HepG2 (cell line): ENCODE measurements at regions of chr2 and their contacts with region 1.

Region 1: GRCh38 chr2:223123855-223124610 is 72.0 kb downstream of the KCNE4 start:
- DNase-seq: no peak
- ATAC-seq: no peak
- H3K4me3 ChIP-seq: no peak overlapping the region
- H3K27ac ChIP-seq: no peak overlapping the region
- H3K4me1 ChIP-seq: no peaks in the 10 kb centered on the region
- H3K27me3 ChIP-seq: no peaks in the 10 kb centered on the region
- CTCF ChIP-seq: no peak
- EP300 ChIP-seq: no peak
- POLR2A ChIP-seq: no peak
- RAD21 ChIP-seq: no peak

Region 2: GRCh38 chr2:223155956-223156355 is 31.9 kb after region 1 on chr2:
- CTCF ChIA-PET with region 1: no interaction called
- POLR2A ChIA-PET with region 1: no interaction called
- in situ Hi-C with region 1: no loop called
- intact Hi-C with region 1: loop called (anchors 2 kb)
- DNase-seq: no peak
- ATAC-seq: no peak
- H3K4me3 ChIP-seq: no peak overlapping the region
- H3K27ac ChIP-seq: no peak overlapping the region
- H3K4me1 ChIP-seq: no peaks in the 10 kb centered on the region
- H3K27me3 ChIP-seq: no peaks in the 10 kb centered on the region
- CTCF ChIP-seq: no peak
- EP300 ChIP-seq: no peak
- POLR2A ChIP-seq: no peak
- RAD21 ChIP-seq: no peak

Region 3: DNA sequence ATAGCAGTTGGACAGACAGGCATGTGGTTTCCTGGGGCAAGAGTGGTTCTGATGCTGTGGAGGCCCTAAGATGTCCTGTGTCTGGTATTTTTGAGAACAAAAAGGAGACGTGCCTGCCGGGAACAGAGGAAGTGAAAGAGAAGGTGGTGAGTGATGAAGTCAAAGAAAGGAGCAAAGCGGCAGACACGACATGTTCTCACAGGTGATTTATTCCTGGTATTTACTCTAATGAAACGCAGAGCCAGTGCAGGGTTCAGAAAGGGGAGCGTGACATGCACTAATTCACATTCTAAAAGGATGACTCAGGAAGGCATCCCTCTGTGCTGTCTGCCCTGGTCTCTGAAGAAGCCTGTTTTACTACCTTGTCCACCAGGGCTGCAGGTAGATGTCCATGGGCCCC is 138.9 kb after region 1 on chr2:
- CTCF ChIA-PET with region 1: no interaction called
- POLR2A ChIA-PET with region 1: no interaction called
- in situ Hi-C with region 1: no loop called
- intact Hi-C with region 1: no loop called
- DNase-seq: no peak
- ATAC-seq: peak; percentile 62
- H3K4me3 ChIP-seq: no peak overlapping the region
- H3K27ac ChIP-seq: no peak overlapping the region
- H3K4me1 ChIP-seq: no peaks in the 10 kb centered on the region
- H3K27me3 ChIP-seq: no peaks in the 10 kb centered on the region
- CTCF ChIP-seq: no peak
- EP300 ChIP-seq: no peak
- POLR2A ChIP-seq: no peak
- RAD21 ChIP-seq: no peak

Region 4: DNA sequence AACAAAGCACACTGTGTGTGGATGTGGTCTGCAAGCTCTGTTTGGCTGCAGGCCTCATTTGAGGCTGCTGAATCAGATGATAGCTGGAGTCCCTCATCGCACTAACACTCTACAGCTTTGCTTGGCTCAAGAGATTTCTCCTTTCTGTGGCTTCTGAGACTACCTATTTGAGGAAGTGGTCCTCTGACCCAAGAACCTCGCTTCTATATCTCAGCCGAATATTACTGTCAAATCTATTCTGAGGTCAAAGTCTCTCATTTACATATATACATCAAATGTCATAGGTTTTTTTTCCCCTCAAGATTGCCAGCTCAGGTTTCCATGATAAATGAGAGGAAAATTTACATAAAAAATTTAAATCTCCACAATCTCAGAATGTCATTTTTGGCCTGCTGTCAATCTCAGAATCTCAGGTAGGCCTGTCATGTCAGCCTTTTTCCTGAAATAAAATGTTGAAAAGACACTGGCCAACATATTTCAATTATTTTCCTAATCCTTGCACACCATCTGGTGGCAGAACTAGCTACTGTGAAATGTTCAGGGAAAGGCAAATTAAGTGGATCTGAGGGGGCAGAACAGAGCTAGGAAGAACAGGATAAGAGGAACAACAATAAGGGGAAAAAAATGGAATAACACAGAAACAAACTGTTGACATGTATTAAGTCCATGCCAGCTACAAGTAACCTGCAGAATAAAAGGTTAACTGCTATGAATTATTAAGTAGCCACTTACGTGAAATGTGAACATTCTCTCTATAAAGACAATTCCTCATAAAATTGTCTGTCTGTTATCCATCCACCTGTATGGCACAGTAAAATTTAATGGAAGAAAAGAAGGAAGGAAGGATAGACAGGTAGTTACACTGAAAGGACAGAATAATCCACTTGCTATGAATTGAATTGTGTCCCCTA is 674.0 kb after region 1 on chr2:
- CTCF ChIA-PET with region 1: no interaction called
- POLR2A ChIA-PET with region 1: no interaction called
- in situ Hi-C with region 1: no loop called
- intact Hi-C with region 1: no loop called
- DNase-seq: peak; percentile 59
- ATAC-seq: peak; percentile 87
- H3K4me3 ChIP-seq: no peak overlapping the region
- H3K27ac ChIP-seq: no peak overlapping the region
- H3K4me1 ChIP-seq: peaks cover 11% of the 10 kb centered on the region; the same call in 1 of the 2 replicates
- H3K27me3 ChIP-seq: no peaks in the 10 kb centered on the region
- CTCF ChIP-seq: peak; percentile 77
- EP300 ChIP-seq: no peak
- POLR2A ChIP-seq: no peak
- RAD21 ChIP-seq: peak; percentile 75